Left colon (tissue), 2 donors: ENCODE measurements at regions of chr9 and their contacts with region 1.

Region 1: GRCh38 chr9:5593904-5594303 is 35.0 kb upstream of the RIC1 start:
- DNase-seq: no peak
- ATAC-seq: no peak

Region 2: GRCh38 chr9:5186416-5187169 is 407.3 kb before region 1 on chr9:
- intact Hi-C with region 1: loop called in 1 of 2 experiments (anchors 10 kb)
- DNase-seq: peak; percentile 30 to 49
- ATAC-seq: peak; percentile 95

Region 3: GRCh38 chr9:5450359-5451091 is 143.4 kb before region 1 on chr9 and contains the start of gene CD274:
- intact Hi-C with region 1: loop called in 1 of 2 experiments (anchors 10 kb)
- DNase-seq: peak; percentile 94 to 95
- ATAC-seq: peak; percentile 99
- total RNA-seq, gene CD274: 1.7 to 3.2 TPM